GM12878 (cell line): ENCODE measurements at regions of chr14 and their contacts with region 1.

Region 1: DNA sequence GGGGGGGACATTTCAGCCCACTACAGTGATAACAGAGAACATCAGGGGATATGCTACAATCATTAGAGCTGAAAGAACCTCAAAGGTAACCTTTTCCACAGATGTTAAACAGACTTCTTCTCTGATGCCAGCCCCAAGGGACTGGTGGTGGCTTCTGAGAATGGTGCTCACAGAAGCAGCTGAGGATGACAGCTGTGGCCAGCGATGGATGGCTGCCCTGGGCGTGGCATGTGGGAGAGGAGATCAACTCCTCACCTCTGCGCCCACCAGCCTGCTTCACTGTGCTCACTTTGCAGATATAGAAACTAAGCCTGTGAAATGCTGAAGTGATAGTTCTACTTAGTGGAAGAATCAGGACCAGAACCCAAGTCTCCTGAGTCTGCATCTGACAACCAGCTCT is 33.0 kb downstream of the FOXN3 start:
- DNase-seq: peak; percentile 92
- ATAC-seq: peak; percentile 92
- H3K4me3 ChIP-seq: peak overlapping the region; percentile 28
- H3K27ac ChIP-seq: peak overlapping the region; percentile 77
- H3K4me1 ChIP-seq: peaks cover 49% of the 10 kb centered on the region
- H3K27me3 ChIP-seq: no peaks in the 10 kb centered on the region
- CTCF ChIP-seq: no peak
- EP300 ChIP-seq: peak; percentile 46 to 54; a peak in 2 of 4 replicates
- POLR2A ChIP-seq: no peak
- RAD21 ChIP-seq: no peak

Region 2: GRCh38 chr14:89330236-89331002 is 53.6 kb before region 1 on chr14:
- CTCF ChIA-PET with region 1: interaction called, 3 read pairs
- POLR2A ChIA-PET with region 1: no interaction called
- RAD21 ChIA-PET with region 1: interaction called, 5 read pairs
- SMC1A ChIA-PET with region 1: interaction called, 4 read pairs
- in situ Hi-C with region 1: no loop called
- intact Hi-C with region 1: loop called (anchors 1 kb)
- DNase-seq: no peak
- ATAC-seq: peak; percentile 1; the same call in 1 of the 3 replicates
- H3K4me3 ChIP-seq: no peak overlapping the region; the same call in 1 of the 2 replicates
- H3K27ac ChIP-seq: peak overlapping the region; percentile 91
- H3K4me1 ChIP-seq: peaks cover 50% of the 10 kb centered on the region
- H3K27me3 ChIP-seq: no peaks in the 10 kb centered on the region
- CTCF ChIP-seq: no peak
- EP300 ChIP-seq: no peak
- POLR2A ChIP-seq: no peak
- RAD21 ChIP-seq: no peak

Region 3: GRCh38 chr14:89371585-89372511 is 12.2 kb before region 1 on chr14:
- CTCF ChIA-PET with region 1: interaction called, 29 read pairs
- POLR2A ChIA-PET with region 1: interaction called, 13 read pairs
- RAD21 ChIA-PET with region 1: interaction called, 37 read pairs
- SMC1A ChIA-PET with region 1: interaction called, 16 read pairs
- in situ Hi-C with region 1: no loop called
- intact Hi-C with region 1: no loop called
- DNase-seq: no peak
- ATAC-seq: peak; percentile 32
- H3K4me3 ChIP-seq: no peak overlapping the region
- H3K27ac ChIP-seq: peak overlapping the region; percentile 40; the same call in 1 of the 2 replicates
- H3K4me1 ChIP-seq: peaks cover 20% of the 10 kb centered on the region
- H3K27me3 ChIP-seq: no peaks in the 10 kb centered on the region
- CTCF ChIP-seq: no peak
- EP300 ChIP-seq: no peak
- POLR2A ChIP-seq: no peak
- RAD21 ChIP-seq: no peak; the same call in 1 of the 2 replicates

Region 4: GRCh38 chr14:89408907-89409700 is 25.1 kb after region 1 on chr14:
- CTCF ChIA-PET with region 1: interaction called, 8 read pairs
- POLR2A ChIA-PET with region 1: interaction called, 4 read pairs
- RAD21 ChIA-PET with region 1: interaction called, 21 read pairs
- SMC1A ChIA-PET with region 1: interaction called, 16 read pairs
- in situ Hi-C with region 1: no loop called
- intact Hi-C with region 1: no loop called
- DNase-seq: no peak
- ATAC-seq: peak; percentile 38; the same call in 2 of the 3 replicates
- H3K4me3 ChIP-seq: peak overlapping the region; percentile 57
- H3K27ac ChIP-seq: peak overlapping the region; percentile 49
- H3K4me1 ChIP-seq: peaks cover 28% of the 10 kb centered on the region
- H3K27me3 ChIP-seq: no peaks in the 10 kb centered on the region
- CTCF ChIP-seq: no peak
- EP300 ChIP-seq: no peak
- POLR2A ChIP-seq: no peak
- RAD21 ChIP-seq: no peak